ENCODE measurements at regions of chr6 and their contacts with region 1.

Region 1: DNA sequence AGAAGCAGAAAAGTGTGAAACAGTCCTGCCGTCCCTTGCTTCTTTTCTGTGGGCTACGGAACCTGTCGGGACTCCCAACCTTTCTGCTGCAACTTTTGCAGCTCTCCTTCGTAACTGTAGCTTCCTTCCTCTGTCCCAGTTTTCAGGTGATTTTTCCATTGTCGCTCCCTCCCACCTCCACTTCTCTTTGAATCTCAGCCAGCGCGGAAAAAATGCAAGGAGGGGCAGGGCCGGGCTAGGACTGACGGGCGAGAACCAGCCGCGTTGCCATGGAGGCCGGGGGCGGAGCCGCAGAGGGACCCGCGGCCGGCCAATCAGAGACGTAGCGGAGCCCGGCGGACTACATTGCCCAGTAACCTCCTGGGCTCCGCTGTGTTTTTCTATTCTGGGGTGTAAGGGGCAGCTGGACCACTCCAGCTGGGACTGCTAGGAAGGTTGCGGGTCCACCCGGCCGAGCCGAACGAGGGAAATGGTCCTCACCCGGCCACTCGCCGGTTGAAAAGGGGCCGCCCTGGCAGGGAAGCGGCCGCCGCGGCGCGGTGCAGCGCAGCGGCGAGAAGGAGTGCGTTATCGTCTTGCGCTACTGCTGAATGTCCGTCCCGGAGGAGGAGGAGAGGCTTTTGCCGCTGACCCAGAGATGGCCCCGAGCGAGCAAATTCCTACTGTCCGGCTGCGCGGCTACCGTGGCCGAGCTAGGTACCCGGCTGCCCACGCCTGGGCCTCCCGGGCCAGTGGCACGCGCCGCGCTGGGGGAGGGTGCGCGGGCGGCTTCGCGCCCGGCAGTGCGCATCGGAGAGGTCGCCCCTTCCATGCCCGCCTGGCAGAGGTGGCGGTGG is at the starts of genes CYP39A1 and SLC25A27:
- DNase-seq: peak; percentile 87 to 90
- ATAC-seq: peak; percentile 99
- H3K4me3 ChIP-seq: peak within 1 kb of the TSS; percentile 77 to 97 (median 88)
- H3K27ac ChIP-seq: peak within 1 kb of the TSS; percentile 87 to 97 (median 93)
- H3K4me1 ChIP-seq: peaks cover 25% of the 10 kb centered on the region in 2 donors
- H3K27me3 ChIP-seq: no peaks in the 10 kb centered on the region
- CTCF ChIP-seq: peak in 1 of 5 experiments; percentile 18
- POLR2A ChIP-seq: peak; percentile 60 to 83
- total RNA-seq, gene CYP39A1: 0.24 to 3.8 (median 1.0) TPM
- total RNA-seq, gene SLC25A27: 0.56 to 24.2 (median 6.5) TPM

Region 2: DNA sequence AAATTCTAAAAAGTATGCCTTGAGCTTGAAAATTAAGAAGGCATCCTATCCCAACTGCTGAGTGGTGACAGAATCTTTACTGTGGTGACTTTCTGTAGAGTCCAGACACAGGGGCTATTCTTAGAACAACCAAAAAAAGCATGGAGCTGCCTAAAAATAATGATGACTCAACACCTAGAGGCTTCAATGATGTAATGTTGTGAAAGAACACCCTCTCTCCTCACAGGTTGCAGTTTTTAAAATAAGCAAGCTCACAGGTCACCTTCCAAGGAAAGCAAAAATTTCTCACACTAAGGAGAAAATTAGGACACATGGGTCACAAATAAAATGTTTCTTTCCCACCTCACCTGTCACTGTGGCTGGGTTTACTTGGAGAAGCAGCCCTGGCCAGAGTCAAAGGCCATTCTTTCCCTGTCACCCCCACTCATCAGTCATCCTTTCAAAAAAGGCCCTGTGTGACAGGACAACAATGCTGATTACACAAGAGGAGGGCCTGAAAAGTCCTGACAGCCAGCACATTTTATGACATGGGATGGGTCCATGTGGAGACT is 215.1 kb before region 1 on chr6:
- in situ Hi-C with region 1: no loop called
- intact Hi-C with region 1: loop called (anchors 5 kb)
- DNase-seq: peak; percentile 58 to 72
- ATAC-seq: peak; percentile 91 to 95
- H3K4me3 ChIP-seq: no peak overlapping the region
- H3K27ac ChIP-seq: peak overlapping the region; percentile 81 to 92 (median 87)
- H3K4me1 ChIP-seq: peaks cover 59 to 61% of the 10 kb centered on the region in 2 donors
- H3K27me3 ChIP-seq: no peaks in the 10 kb centered on the region
- CTCF ChIP-seq: no peak
- POLR2A ChIP-seq: peak; percentile 33 to 70

Region 3: GRCh38 chr6:46539866-46540265 is 113.0 kb before region 1 on chr6:
- in situ Hi-C with region 1: no loop called
- intact Hi-C with region 1: no loop called
- DNase-seq: no peak
- ATAC-seq: no peak
- H3K4me3 ChIP-seq: no peak overlapping the region
- H3K27ac ChIP-seq: no peak overlapping the region
- H3K4me1 ChIP-seq: no peaks in the 10 kb centered on the region
- H3K27me3 ChIP-seq: no peaks in the 10 kb centered on the region
- CTCF ChIP-seq: no peak
- POLR2A ChIP-seq: no peak

Measured in gastrocnemius medialis (tissue), 4 donors.